ENCODE measurements at regions of chr3 and their contacts with region 1.

Region 1: DNA sequence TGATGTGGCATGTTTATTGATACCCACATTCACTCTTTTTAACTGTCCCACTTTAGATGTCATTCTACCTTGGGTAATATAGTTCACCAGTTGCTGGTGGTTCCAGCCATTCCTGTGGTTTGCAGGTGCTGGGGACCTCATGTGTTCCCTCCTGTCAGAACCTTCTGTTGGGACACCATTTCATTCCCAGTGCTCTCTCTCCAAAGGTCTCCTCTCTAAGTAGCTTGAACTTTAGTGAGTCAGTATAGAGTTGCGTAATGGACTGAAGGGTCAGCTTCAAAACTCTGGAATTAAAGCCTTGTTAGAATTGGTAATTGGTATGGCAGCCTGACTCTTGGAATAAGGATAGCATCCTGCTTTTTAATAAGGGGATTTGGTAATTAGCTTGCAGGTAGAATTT is 108.5 kb downstream of the PLCL2 start:
- DNase-seq: peak; percentile 55
- ATAC-seq: no peak
- H3K4me3 ChIP-seq: no peak overlapping the region
- H3K27ac ChIP-seq: no peak overlapping the region
- H3K4me1 ChIP-seq: peaks cover 36% of the 10 kb centered on the region
- H3K27me3 ChIP-seq: no peaks in the 10 kb centered on the region
- CTCF ChIP-seq: no peak

Region 2: GRCh38 chr3:16897254-16897926 is 95.8 kb before region 1 on chr3:
- CTCF ChIA-PET with region 1: no interaction called
- POLR2A ChIA-PET with region 1: no interaction called
- intact Hi-C with region 1: loop called (anchors 1 kb)
- DNase-seq: peak; percentile 94
- ATAC-seq: peak; percentile 86
- H3K4me3 ChIP-seq: peak overlapping the region; percentile 52
- H3K27ac ChIP-seq: peak overlapping the region; percentile 85
- H3K4me1 ChIP-seq: peaks cover 25% of the 10 kb centered on the region
- H3K27me3 ChIP-seq: no peaks in the 10 kb centered on the region
- CTCF ChIP-seq: no peak

Region 3: DNA sequence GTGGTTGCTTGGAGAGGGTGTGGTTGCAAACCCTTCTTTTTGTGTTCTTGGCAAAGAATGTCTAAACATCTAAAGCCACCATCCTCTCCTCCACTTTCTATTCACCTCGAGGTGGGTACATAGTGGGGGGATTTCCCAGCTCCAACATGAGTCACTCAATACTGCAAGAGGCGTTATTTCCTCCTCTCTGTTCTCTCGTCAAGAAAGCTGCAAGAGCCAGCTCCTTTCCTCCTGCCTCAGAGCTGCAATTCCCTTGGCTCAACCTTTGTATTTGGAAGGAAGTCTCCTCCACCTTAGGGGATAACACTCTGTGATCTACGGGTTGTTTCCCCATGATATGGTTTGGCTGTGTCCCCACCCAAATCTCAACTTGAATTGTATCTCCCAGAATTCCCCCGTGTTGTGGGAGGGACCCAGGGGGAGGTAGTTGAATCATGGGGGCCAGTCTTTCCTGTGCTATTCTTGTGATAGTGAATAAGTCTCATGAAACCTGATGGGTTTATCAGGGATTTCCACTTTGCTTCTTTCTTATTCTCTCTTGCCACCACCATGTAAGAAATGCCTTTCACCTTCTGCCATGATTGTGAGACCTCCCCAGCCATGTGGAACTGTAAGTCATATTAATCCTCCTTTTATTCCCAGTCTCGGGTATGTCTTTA is 29.9 kb after region 1 on chr3:
- CTCF ChIA-PET with region 1: no interaction called
- POLR2A ChIA-PET with region 1: no interaction called
- intact Hi-C with region 1: no loop called
- DNase-seq: no peak
- ATAC-seq: no peak
- H3K4me3 ChIP-seq: no peak overlapping the region
- H3K27ac ChIP-seq: no peak overlapping the region
- H3K4me1 ChIP-seq: no peaks in the 10 kb centered on the region
- H3K27me3 ChIP-seq: no peaks in the 10 kb centered on the region
- CTCF ChIP-seq: no peak

Region 4: DNA sequence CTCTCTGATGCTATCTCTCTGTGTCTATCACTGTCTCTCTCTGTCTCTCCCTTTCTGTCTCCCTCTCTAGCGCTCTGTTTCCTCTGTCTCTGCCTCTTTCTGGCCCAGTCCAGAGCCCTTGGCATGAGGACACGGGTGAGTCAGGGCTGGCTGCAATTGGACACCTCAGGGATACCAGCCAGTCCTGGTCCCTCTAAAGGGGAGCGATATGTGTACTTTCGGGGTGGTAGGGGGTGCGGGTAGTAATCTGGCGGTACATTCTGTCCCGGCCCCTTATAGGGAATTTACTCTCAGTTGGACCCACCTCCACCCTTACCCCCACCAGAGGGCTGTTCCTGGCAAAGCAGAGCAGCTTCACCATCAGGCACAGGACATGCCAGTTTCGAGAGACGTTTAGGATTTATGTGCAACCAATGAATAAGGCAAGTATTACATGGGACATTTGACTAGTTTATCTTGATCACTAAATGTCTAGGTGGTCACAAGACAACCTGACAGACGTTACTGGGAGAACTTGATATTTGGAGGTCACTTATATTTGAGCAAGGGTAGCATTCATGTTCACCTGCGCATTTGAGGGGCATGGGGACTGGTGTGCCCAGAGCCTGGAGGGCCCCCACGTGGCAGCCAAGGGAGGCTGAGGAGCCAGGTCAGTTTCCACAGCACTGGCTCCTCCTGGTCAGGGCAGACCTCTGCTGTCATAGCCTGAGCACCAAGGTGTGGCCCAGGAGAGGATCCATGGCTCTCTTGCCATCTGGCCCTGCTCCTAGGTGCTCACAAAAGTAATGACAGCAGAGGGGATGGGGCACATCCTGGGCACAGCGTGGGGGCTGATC is 147.7 kb after region 1 on chr3:
- CTCF ChIA-PET with region 1: no interaction called
- POLR2A ChIA-PET with region 1: no interaction called
- intact Hi-C with region 1: no loop called
- DNase-seq: peak; percentile 37
- ATAC-seq: peak; percentile 83
- H3K4me3 ChIP-seq: no peak overlapping the region
- H3K27ac ChIP-seq: no peak overlapping the region
- H3K4me1 ChIP-seq: no peaks in the 10 kb centered on the region
- H3K27me3 ChIP-seq: no peaks in the 10 kb centered on the region
- CTCF ChIP-seq: peak; percentile 40; the same call in 1 of the 2 replicates

Region 5: GRCh38 chr3:17233398-17233800 is 240.2 kb after region 1 on chr3:
- CTCF ChIA-PET with region 1: no interaction called
- POLR2A ChIA-PET with region 1: no interaction called
- intact Hi-C with region 1: loop called (anchors 1 kb)
- DNase-seq: peak; percentile 97
- ATAC-seq: peak; percentile 99
- H3K4me3 ChIP-seq: no peak overlapping the region
- H3K27ac ChIP-seq: no peak overlapping the region
- H3K4me1 ChIP-seq: peaks cover 18% of the 10 kb centered on the region
- H3K27me3 ChIP-seq: no peaks in the 10 kb centered on the region
- CTCF ChIP-seq: peak; percentile 93

Region 6: GRCh38 chr3:18469775-18470174 is 1476.5 kb after region 1 on chr3:
- CTCF ChIA-PET with region 1: no interaction called
- POLR2A ChIA-PET with region 1: interaction called, 11 read pairs
- intact Hi-C with region 1: no loop called
- DNase-seq: no peak
- ATAC-seq: no peak
- H3K4me3 ChIP-seq: no peak overlapping the region
- H3K27ac ChIP-seq: no peak overlapping the region
- H3K4me1 ChIP-seq: no peaks in the 10 kb centered on the region
- H3K27me3 ChIP-seq: peaks cover 3% of the 10 kb centered on the region; the same call in 1 of the 2 replicates
- CTCF ChIP-seq: no peak

Measured in PC-3 (cell line).